Activated CD4-positive, alpha-beta T cell treated with anti-CD3 and anti-CD28 coated beads, Interleukin-2, amount 10 ng/mL, durations not matched to agents 7 days and 5 days (primary cell): ENCODE measurements at regions of chr5 and their contacts with region 1.

Region 1: GRCh38 chr5:147453875-147454814 is 55.7 kb downstream of the DPYSL3 start:
- DNase-seq: peak; percentile 74
- H3K4me3 Mint-ChIP-seq: peak overlapping the region; percentile 71
- H3K27ac Mint-ChIP-seq: no peak overlapping the region
- H3K4me1 Mint-ChIP-seq: peaks cover 8% of the 10 kb centered on the region
- H3K27me3 Mint-ChIP-seq: peaks cover 56% of the 10 kb centered on the region

Region 2: DNA sequence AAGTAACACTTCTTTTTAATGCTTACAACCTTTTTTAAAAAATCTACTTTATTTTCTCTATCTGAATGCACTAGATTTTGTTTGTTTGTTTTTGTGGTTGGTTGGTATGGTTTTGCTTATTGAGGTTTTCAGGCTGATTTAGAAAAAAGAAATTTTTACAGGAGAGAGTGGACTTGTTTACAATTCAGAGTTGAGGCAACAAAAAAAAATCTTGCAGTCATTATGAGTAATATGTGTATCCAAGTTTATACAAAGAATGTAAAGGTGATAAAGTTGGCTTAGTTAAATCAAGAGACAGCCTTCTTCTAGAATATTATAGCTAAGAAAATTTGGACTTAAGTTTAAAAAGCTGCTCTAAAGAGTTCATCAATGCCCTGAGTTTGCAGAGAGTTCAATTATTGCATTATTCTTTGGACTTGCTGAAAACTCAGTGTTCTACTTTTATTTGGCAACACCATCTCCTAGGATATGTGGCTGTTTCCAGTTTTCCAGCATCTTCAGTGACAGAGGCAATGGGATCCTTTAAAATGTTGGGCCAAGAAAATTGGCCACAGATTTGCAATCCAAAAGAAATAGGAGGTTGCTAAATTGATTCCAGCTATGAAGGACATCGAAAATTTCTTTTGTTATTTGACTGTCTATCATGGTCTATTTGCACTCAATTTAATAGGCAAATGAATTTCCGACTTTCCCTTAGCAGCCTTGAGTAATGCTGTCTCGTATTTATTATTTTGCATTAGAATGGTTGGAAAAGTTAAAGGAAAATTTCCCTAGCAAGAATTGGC is 208.6 kb before region 1 on chr5:
- CTCF ChIA-PET with region 1: no interaction called
- POLR2A ChIA-PET with region 1: no interaction called
- DNase-seq: no peak
- H3K4me3 Mint-ChIP-seq: no peak overlapping the region
- H3K27ac Mint-ChIP-seq: no peak overlapping the region
- H3K4me1 Mint-ChIP-seq: no peaks in the 10 kb centered on the region
- H3K27me3 Mint-ChIP-seq: no peaks in the 10 kb centered on the region

Region 3: GRCh38 chr5:147437161-147437596 is 17.0 kb before region 1 on chr5:
- CTCF ChIA-PET with region 1: no interaction called
- POLR2A ChIA-PET with region 1: no interaction called
- DNase-seq: no peak
- H3K4me3 Mint-ChIP-seq: no peak overlapping the region
- H3K27ac Mint-ChIP-seq: no peak overlapping the region
- H3K4me1 Mint-ChIP-seq: no peaks in the 10 kb centered on the region
- H3K27me3 Mint-ChIP-seq: no peaks in the 10 kb centered on the region

Region 4: DNA sequence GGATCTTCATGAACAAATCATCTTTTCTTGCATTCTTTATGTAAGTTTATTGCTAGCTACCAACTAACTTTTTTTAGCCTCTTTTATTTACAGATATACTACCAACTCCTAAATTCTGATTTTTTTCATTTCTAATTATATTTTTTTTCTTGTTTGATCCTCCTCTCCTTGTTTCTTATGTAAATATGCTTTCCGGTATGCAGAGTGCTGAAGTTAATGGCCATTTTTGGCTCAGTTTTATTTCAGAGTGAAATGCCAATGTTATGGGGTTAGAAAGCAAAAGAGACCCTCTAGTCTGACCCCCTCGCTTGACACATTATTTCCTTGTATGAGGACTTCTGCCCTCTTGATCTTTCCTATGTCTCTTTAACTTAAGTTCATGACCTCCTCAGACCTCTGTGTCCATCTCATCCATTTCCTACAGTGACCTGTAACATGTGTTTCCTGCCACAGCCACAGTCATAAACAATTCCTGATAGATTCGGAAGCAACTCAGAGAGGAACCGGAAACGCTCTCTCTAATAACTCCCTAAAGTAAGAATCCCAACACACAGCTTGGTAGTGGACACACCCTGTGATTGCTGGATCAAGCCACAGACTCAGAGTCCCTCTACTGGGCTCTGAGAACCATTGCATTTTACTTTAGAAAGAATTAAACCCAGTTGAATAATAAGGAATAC is 1774.6 kb after region 1 on chr5:
- CTCF ChIA-PET with region 1: interaction called, 10 read pairs
- POLR2A ChIA-PET with region 1: no interaction called
- DNase-seq: no peak
- H3K4me3 Mint-ChIP-seq: no peak overlapping the region
- H3K27ac Mint-ChIP-seq: no peak overlapping the region
- H3K4me1 Mint-ChIP-seq: peaks cover 6% of the 10 kb centered on the region
- H3K27me3 Mint-ChIP-seq: peaks cover 3% of the 10 kb centered on the region